Activated CD4-positive, alpha-beta memory T cell treated with anti-CD3 and anti-CD28 coated beads for 36 hours (primary cell): ENCODE measurements at regions of chr16 and their contacts with region 1.

Region 1: GRCh38 chr16:22077700-22078313 is 14.5 kb upstream of the VWA3A start:
- DNase-seq: peak; percentile 81
- H3K4me3 Mint-ChIP-seq: no peak overlapping the region
- H3K27ac Mint-ChIP-seq: no peak overlapping the region
- H3K4me1 Mint-ChIP-seq: no peaks in the 10 kb centered on the region
- H3K27me3 Mint-ChIP-seq: no peaks in the 10 kb centered on the region

Region 2: GRCh38 chr16:22001591-22001990 is 76.2 kb before region 1 on chr16:
- CTCF ChIA-PET with region 1: interaction called, 529 read pairs
- POLR2A ChIA-PET with region 1: interaction called, 8 read pairs
- intact Hi-C with region 1: loop called (anchors 1 kb)
- DNase-seq: no peak
- H3K4me3 Mint-ChIP-seq: no peak overlapping the region
- H3K27ac Mint-ChIP-seq: no peak overlapping the region
- H3K4me1 Mint-ChIP-seq: peaks cover 10% of the 10 kb centered on the region
- H3K27me3 Mint-ChIP-seq: no peaks in the 10 kb centered on the region

Region 3: GRCh38 chr16:22014271-22014873 is 63.4 kb before region 1 on chr16:
- CTCF ChIA-PET with region 1: interaction called, 529 read pairs
- POLR2A ChIA-PET with region 1: interaction called, 3 read pairs
- intact Hi-C with region 1: no loop called
- DNase-seq: no peak
- H3K4me3 Mint-ChIP-seq: no peak overlapping the region
- H3K27ac Mint-ChIP-seq: no peak overlapping the region
- H3K4me1 Mint-ChIP-seq: peaks cover 70% of the 10 kb centered on the region
- H3K27me3 Mint-ChIP-seq: no peaks in the 10 kb centered on the region

Region 4: DNA sequence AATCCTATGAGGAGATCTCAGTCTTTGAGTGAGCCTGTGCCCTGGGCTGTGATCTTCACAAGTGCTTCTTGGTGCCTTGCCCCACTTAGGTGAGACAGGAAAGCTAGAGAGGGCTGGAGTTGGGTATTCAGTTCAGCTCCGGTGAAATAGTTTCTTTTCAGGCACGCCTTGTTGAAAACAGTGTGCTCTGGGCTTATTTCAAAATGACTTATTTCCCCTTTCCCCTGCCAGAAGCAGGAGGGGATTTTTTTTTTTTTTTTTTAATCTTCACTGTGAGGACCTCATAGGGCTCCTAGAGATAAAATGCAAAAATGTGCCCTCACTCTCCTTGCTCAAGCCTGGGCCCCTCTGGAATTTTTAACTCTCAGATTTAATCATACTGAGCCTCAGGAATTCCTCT is 42.7 kb before region 1 on chr16:
- CTCF ChIA-PET with region 1: interaction called, 27 read pairs
- POLR2A ChIA-PET with region 1: no interaction called
- intact Hi-C with region 1: no loop called
- DNase-seq: peak; percentile 10
- H3K4me3 Mint-ChIP-seq: no peak overlapping the region
- H3K27ac Mint-ChIP-seq: peak overlapping the region; percentile 24
- H3K4me1 Mint-ChIP-seq: peaks cover 40% of the 10 kb centered on the region
- H3K27me3 Mint-ChIP-seq: no peaks in the 10 kb centered on the region

Region 5: GRCh38 chr16:22063888-22064467 is 13.8 kb before region 1 on chr16:
- CTCF ChIA-PET with region 1: interaction called, 51 read pairs
- POLR2A ChIA-PET with region 1: no interaction called
- intact Hi-C with region 1: no loop called
- DNase-seq: no peak
- H3K4me3 Mint-ChIP-seq: no peak overlapping the region
- H3K27ac Mint-ChIP-seq: no peak overlapping the region
- H3K4me1 Mint-ChIP-seq: peaks cover 22% of the 10 kb centered on the region
- H3K27me3 Mint-ChIP-seq: no peaks in the 10 kb centered on the region

Region 6: DNA sequence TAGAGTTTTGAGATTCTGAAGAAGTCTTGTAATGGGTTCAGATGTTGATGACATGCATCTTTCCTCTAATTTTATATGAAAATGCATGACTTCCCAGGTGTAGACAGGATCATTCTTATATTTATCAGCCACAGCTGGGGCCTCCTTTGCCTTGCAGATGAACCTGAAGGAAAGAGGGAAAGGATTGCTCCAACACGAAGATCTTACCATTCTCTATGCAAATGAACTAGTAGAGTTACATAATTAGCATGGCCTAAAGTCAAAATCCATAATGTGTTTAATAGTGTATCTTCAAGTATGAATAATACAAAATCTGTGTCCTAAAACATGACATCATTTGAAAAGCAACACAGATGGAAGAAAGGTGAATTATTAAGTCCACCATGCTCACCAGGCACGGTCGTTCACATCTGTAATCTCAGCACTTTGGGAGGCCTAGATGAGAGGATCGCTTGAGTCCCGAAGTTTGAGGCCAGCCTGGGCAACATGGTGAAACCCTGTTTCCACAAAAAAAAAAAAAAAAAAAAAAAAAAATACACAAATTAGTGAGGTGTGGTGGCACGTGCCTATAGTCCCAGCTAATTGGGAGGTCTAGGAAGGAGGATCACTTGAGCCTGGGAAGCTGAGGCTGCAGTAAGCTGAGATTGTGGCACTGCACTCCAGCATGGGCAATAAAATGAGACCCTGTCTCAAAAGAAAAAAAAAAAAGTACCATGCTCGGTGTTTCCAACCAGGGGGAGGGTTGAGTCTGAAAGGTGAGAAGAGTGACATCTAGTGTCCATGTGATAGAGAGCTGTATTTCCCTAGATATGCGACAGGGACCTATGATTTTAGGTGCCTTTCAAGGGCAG is 20.8 kb after region 1 on chr16:
- CTCF ChIA-PET with region 1: interaction called, 38 read pairs
- POLR2A ChIA-PET with region 1: no interaction called
- intact Hi-C with region 1: no loop called
- DNase-seq: no peak
- H3K4me3 Mint-ChIP-seq: no peak overlapping the region
- H3K27ac Mint-ChIP-seq: no peak overlapping the region
- H3K4me1 Mint-ChIP-seq: no peaks in the 10 kb centered on the region
- H3K27me3 Mint-ChIP-seq: peaks cover 15% of the 10 kb centered on the region